ENCODE measurements at regions of chr22 and their contacts with region 1.

Region 1: DNA sequence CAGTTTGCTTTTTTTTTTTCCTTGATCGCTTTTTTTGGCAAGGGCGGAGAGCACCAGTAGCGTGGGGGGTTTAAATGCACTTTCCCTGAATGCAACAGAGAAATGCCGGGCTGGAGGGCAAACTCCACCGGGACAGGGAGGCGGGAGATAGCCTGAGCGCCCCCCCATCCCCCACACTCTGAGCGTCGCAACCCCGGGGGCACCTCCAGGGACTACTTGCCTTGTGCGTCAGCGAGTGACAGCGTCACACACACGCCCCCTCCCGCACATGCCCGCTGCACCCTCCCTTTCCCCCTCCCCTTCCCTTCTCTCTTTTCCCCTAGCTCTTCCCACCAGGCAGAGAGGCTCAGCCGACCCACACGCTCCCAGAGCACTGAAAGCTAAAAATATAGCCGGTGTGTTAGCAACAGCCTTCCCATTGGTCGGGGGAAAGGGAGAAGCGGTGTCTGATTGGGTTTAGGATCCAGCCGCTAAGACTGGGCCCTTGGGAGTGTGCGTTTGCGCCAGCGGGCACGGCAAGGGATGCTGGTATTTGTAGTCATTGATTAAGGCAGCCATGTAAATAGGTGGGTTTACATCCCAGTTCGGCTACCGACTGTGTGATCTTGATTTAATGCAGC is 1.7 kb upstream of the TOB2 start:
- DNase-seq: peak; percentile 91 to 97 (median 93)
- H3K4me3 ChIP-seq: peak overlapping the region; percentile 71 to 94
- H3K4me3 Mint-ChIP-seq: peak overlapping the region; percentile 90 to 98 (median 96)
- H3K27ac ChIP-seq: peak overlapping the region; percentile 87
- H3K27ac Mint-ChIP-seq: peak overlapping the region; percentile 94 to 99 (median 98)
- H3K4me1 ChIP-seq: peaks cover 11% of the 10 kb centered on the region
- H3K4me1 Mint-ChIP-seq: peaks cover 12 to 46% (median 19%) of the 10 kb centered on the region in 4 donors
- H3K27me3 ChIP-seq: no peaks in the 10 kb centered on the region
- H3K27me3 Mint-ChIP-seq: peaks cover 0 to 2% of the 10 kb centered on the region in 2 donors

Region 2: GRCh38 chr22:41070665-41071331 is 377.5 kb before region 1 on chr22:
- CTCF ChIA-PET with region 1: no interaction called
- POLR2A ChIA-PET with region 1: no interaction called
- intact Hi-C with region 1: no loop called
- DNase-seq: no peak
- H3K4me3 ChIP-seq: no peak overlapping the region
- H3K4me3 Mint-ChIP-seq: no peak overlapping the region
- H3K27ac ChIP-seq: no peak overlapping the region
- H3K27ac Mint-ChIP-seq: no peak overlapping the region
- H3K4me1 ChIP-seq: peaks cover 9% of the 10 kb centered on the region
- H3K4me1 Mint-ChIP-seq: peaks cover 5 to 8% (median 6%) of the 10 kb centered on the region in 4 donors
- H3K27me3 ChIP-seq: no peaks in the 10 kb centered on the region
- H3K27me3 Mint-ChIP-seq: no peaks in the 10 kb centered on the region

Region 3: DNA sequence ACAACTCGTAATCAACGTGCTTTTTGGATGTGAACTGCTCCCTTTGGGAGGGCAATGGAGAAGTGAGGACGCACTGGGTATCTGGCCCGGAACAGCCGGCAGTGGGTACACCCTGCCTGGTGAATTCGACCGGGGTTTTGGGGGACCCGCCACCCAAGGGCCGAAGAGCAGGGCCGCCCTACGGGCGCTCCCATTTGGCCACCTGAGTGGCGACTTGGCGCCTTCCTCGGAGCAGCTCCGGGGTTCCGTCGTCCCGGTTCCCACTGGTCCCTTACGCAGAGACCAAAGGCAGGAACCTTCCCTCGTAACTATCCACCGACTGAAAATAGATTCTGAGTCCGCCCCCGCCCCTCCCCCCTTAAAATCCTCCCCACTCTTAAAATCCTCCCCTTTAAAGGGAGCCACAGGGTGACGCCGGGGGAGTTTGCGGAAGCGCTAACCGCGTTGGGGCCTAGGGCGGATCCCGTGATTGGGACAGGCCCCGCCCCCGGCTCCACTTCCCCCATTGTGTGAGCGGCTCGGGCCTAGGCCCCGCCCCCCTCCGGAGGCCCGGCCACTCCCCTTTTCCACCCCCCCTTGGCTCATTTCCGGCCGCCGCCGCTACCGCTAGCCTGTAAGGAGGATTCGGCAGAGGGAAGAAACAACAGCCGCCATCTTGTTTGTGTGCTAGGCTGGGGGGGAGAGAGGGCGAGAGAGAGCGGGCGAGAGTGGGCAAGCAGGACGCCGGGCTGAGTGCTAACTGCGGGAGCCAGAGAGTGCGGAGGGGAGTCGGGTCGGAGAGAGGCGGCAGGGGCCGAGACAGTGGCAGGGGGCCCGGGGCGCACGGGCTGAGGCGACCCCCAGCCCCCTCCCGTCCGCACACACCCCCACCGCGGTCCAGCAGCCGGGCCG is 356.9 kb before region 1 on chr22:
- CTCF ChIA-PET with region 1: no interaction called
- POLR2A ChIA-PET with region 1: interaction called, 4 read pairs
- intact Hi-C with region 1: loop called (anchors 5 kb)
- DNase-seq: peak; percentile 98 to 99 (median 99)
- H3K4me3 ChIP-seq: peak overlapping the region; percentile 79 to 93
- H3K4me3 Mint-ChIP-seq: peak overlapping the region; percentile 93 to 100 (median 98)
- H3K27ac ChIP-seq: peak overlapping the region; percentile 99
- H3K27ac Mint-ChIP-seq: peak overlapping the region; percentile 97 to 100 (median 99)
- H3K4me1 ChIP-seq: peaks cover 27% of the 10 kb centered on the region
- H3K4me1 Mint-ChIP-seq: peaks cover 20 to 44% (median 27%) of the 10 kb centered on the region in 4 donors
- H3K27me3 ChIP-seq: no peaks in the 10 kb centered on the region
- H3K27me3 Mint-ChIP-seq: no peaks in the 10 kb centered on the region

Region 4: DNA sequence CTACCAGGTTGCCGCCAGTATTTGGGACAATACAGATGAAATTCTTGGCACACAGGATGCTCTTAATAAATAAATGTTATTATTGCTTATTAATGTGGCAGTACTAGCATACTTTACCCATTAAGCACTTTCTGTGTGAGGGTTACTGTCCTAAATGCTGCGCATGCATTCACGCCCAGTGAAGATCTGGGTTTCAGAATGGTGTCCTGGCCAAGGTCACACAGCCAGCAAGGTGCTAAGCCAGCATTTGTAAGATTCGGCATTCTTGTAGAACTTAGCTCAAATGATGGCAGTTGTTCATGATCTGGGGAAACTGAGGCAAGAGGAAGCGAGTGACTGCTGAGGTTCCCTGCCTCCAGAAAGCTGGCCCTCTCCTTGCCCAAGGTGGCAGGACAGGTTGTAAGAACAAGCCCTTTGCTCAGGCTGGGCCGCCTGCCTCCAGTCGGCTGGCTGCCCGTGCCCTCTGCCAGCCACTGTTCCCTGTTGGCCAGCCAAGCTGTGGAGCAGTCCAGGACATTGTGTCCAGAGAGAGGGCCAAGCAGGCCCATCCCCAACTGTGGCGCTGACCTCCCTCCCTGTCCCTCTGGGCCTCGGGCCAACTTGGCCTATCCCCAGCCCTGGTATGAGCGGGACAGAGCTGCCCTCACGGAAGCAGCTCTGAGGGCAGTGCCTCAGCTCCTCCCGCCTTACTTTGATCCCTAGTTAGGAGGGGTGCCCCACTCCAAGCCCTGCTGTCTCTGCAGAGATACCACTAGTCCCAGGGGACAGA is 30.5 kb before region 1 on chr22:
- CTCF ChIA-PET with region 1: interaction called, 3 read pairs
- POLR2A ChIA-PET with region 1: interaction called, 20 read pairs
- intact Hi-C with region 1: no loop called
- DNase-seq: no peak
- H3K4me3 ChIP-seq: no peak overlapping the region
- H3K4me3 Mint-ChIP-seq: peak overlapping the region in 1 of 8 donors; percentile 36
- H3K27ac ChIP-seq: no peak overlapping the region
- H3K27ac Mint-ChIP-seq: peak overlapping the region in 1 of 7 donors; percentile 61
- H3K4me1 ChIP-seq: peaks cover 26% of the 10 kb centered on the region
- H3K4me1 Mint-ChIP-seq: peaks cover 9 to 32% (median 18%) of the 10 kb centered on the region in 4 donors
- H3K27me3 ChIP-seq: no peaks in the 10 kb centered on the region
- H3K27me3 Mint-ChIP-seq: no peaks in the 10 kb centered on the region

Region 5: GRCh38 chr22:41436322-41437113 is 11.8 kb before region 1 on chr22:
- CTCF ChIA-PET with region 1: no interaction called
- POLR2A ChIA-PET with region 1: interaction called, 33 read pairs
- intact Hi-C with region 1: no loop called
- DNase-seq: no peak
- H3K4me3 ChIP-seq: no peak overlapping the region
- H3K4me3 Mint-ChIP-seq: no peak overlapping the region
- H3K27ac ChIP-seq: no peak overlapping the region
- H3K27ac Mint-ChIP-seq: peak overlapping the region in 5 of 7 donors; percentile 11 to 82 (median 46)
- H3K4me1 ChIP-seq: peaks cover 7% of the 10 kb centered on the region
- H3K4me1 Mint-ChIP-seq: peaks cover 2 to 27% (median 14%) of the 10 kb centered on the region in 4 donors
- H3K27me3 ChIP-seq: no peaks in the 10 kb centered on the region
- H3K27me3 Mint-ChIP-seq: no peaks in the 10 kb centered on the region

Region 6: DNA sequence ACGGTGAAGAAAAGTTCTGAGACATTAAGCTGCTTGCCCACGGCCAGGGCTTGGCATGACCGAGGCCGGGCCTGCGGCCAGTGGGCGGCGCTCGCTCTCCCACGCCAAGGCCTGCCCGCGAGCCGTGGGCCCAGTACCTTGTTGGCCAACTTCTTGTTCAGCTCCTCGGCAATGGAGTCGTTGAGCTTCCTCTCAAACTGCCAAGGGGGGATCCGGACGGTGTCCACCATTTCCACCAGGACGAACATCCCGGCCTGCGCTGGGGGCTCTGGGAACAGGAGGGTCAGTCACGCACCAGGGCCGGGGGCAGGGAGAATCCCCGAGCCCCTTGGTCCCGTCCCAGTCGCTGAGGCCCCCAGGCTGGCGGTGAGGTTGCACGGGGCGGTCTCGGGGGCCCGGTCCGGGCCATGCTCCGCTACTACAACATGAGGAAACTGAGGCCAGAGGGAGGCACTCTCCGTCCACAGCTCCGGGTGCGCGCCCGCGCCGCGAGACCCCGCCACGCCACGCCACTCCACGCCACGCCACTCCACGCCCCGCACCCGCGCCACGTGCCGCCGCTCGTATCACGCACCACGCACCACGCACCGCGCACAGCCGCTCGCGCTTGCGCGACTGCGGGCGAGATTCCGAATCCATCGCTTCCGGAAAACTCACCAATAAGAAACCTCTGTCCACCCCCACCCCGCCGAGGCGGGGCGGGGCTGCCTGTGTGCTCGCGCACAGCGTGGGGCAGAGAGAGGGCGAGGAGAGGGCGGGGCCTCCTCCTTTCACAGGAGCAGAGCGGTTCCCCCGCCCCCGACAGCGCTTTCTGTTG is 95.8 kb after region 1 on chr22 and contains the start of gene POLR3H:
- CTCF ChIA-PET with region 1: no interaction called
- POLR2A ChIA-PET with region 1: interaction called, 7 read pairs
- intact Hi-C with region 1: loop called (anchors 1 kb)
- DNase-seq: peak; percentile 95 to 97 (median 95)
- H3K4me3 ChIP-seq: peak within 1 kb of the TSS; percentile 78
- H3K4me3 Mint-ChIP-seq: peak within 1 kb of the TSS; percentile 95 to 98 (median 98)
- H3K27ac ChIP-seq: peak within 1 kb of the TSS; percentile 77
- H3K27ac Mint-ChIP-seq: peak within 1 kb of the TSS; percentile 90 to 98 (median 96)
- H3K4me1 ChIP-seq: peaks cover 26% of the 10 kb centered on the region
- H3K4me1 Mint-ChIP-seq: peaks cover 29 to 48% (median 41%) of the 10 kb centered on the region in 4 donors
- H3K27me3 ChIP-seq: no peaks in the 10 kb centered on the region
- H3K27me3 Mint-ChIP-seq: no peaks in the 10 kb centered on the region
- total RNA-seq, gene POLR3H: 43.6 to 43.7 TPM

Region 7: GRCh38 chr22:41603873-41604332 is 155.6 kb after region 1 on chr22:
- CTCF ChIA-PET with region 1: no interaction called
- POLR2A ChIA-PET with region 1: no interaction called
- intact Hi-C with region 1: no loop called
- DNase-seq: peak; percentile 81 to 93 (median 83)
- H3K4me3 ChIP-seq: no peak overlapping the region
- H3K4me3 Mint-ChIP-seq: peak overlapping the region; percentile 43 to 79 (median 58)
- H3K27ac ChIP-seq: no peak overlapping the region
- H3K27ac Mint-ChIP-seq: peak overlapping the region; percentile 42 to 95 (median 85)
- H3K4me1 ChIP-seq: peaks cover 28% of the 10 kb centered on the region
- H3K4me1 Mint-ChIP-seq: peaks cover 18 to 38% (median 23%) of the 10 kb centered on the region in 4 donors
- H3K27me3 ChIP-seq: no peaks in the 10 kb centered on the region
- H3K27me3 Mint-ChIP-seq: peaks cover 0 to 2% of the 10 kb centered on the region in 2 donors

Region 8: GRCh38 chr22:41621099-41621910 is 173.0 kb after region 1 on chr22 and contains the start of gene XRCC6:
- CTCF ChIA-PET with region 1: no interaction called
- POLR2A ChIA-PET with region 1: interaction called, 6 read pairs
- intact Hi-C with region 1: loop called (anchors 2 kb)
- DNase-seq: peak; percentile 99 to 100 (median 99)
- H3K4me3 ChIP-seq: peak within 1 kb of the TSS; percentile 76 to 90
- H3K4me3 Mint-ChIP-seq: peak within 1 kb of the TSS; percentile 93 to 100 (median 98)
- H3K27ac ChIP-seq: peak within 1 kb of the TSS; percentile 100
- H3K27ac Mint-ChIP-seq: peak within 1 kb of the TSS; percentile 98 to 100 (median 99)
- H3K4me1 ChIP-seq: peaks cover 45% of the 10 kb centered on the region
- H3K4me1 Mint-ChIP-seq: peaks cover 23 to 52% (median 34%) of the 10 kb centered on the region in 4 donors
- H3K27me3 ChIP-seq: no peaks in the 10 kb centered on the region
- H3K27me3 Mint-ChIP-seq: no peaks in the 10 kb centered on the region
- total RNA-seq, gene XRCC6: 174 to 181 TPM

Measured in CD4-positive, alpha-beta memory T cell (primary cell).